H1 (cell line): ENCODE measurements at regions of chr10 and their contacts with region 1.

Region 1: DNA sequence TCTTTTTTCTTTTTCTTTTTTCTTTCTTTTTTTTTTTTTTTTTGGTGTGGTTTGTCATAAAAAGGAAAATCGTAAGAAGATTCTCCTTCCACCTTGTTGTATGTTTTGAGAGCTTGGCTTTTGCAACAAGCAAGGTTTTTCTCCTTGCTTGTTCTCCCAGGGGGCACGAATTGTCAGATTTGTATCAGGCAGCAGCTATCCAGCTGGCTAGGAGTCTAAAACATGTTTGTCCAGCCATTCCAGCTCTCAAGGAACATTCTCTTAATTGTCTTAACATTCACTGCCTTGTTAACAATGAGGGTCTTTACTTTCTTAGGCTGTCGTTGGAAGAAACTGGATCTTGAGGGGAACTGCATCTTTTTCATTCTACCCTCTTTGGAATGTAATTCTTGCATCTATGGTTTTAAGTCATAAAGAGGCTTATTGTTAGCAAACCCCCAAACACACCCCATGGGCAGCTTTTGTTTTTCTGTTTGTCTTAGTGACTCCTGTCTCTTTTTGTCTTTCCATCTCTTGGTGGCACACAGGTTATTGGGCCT is 14.7 kb downstream of the SHTN1 start:
- DNase-seq: no peak
- H3K4me3 ChIP-seq: no peak overlapping the region
- H3K27ac ChIP-seq: no peak overlapping the region
- H3K4me1 ChIP-seq: peaks cover 4 to 10% (median 5%) of the 10 kb centered on the region in 4 experiments; a peak in 4 of 7 replicates
- H3K27me3 ChIP-seq: peaks cover 0 to 3% (median 0%) of the 10 kb centered on the region in 4 experiments; a peak in 1 of 7 replicates
- CTCF ChIP-seq: no peak
- EP300 ChIP-seq: no peak
- POLR2A ChIP-seq: no peak
- RAD21 ChIP-seq: no peak

Region 2: GRCh38 chr10:116836902-116837523 is 153.3 kb before region 1 on chr10:
- CTCF ChIA-PET with region 1: no interaction called
- POLR2A ChIA-PET with region 1: no interaction called
- DNase-seq: no peak
- H3K4me3 ChIP-seq: no peak overlapping the region
- H3K27ac ChIP-seq: no peak overlapping the region
- H3K4me1 ChIP-seq: peaks cover 29 to 50% (median 41%) of the 10 kb centered on the region in 4 experiments
- H3K27me3 ChIP-seq: no peaks in the 10 kb centered on the region
- CTCF ChIP-seq: peak in 2 of 3 experiments; percentile 12 to 22; a peak in 2 of 4 replicates
- EP300 ChIP-seq: no peak
- POLR2A ChIP-seq: no peak
- RAD21 ChIP-seq: peak; percentile 54 to 61

Region 3: DNA sequence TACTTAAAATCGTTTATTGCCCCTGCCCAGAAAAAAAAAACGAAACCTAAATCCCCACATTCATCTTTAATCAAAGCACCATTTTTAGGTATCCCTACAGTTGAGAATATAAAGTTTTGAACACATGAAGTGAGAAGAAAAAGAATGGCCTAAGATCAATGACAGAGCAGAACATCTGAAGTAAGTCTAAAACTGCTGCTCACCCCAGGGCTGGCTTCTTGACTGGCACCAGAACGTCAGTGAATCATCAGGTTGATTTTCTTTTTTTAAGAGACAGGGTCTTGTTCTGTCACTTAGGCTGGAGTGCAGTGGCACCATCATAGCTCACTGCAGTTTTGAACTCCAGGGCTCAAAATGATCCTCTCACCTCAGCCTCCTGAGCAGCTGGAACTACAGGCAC is 10.3 kb before region 1 on chr10:
- CTCF ChIA-PET with region 1: interaction called, 10 read pairs
- POLR2A ChIA-PET with region 1: no interaction called
- DNase-seq: no peak
- H3K4me3 ChIP-seq: no peak overlapping the region
- H3K27ac ChIP-seq: no peak overlapping the region
- H3K4me1 ChIP-seq: peaks cover 0 to 5% (median 0%) of the 10 kb centered on the region in 4 experiments; a peak in 3 of 7 replicates
- H3K27me3 ChIP-seq: no peaks in the 10 kb centered on the region
- CTCF ChIP-seq: no peak
- EP300 ChIP-seq: no peak
- POLR2A ChIP-seq: no peak
- RAD21 ChIP-seq: no peak

Region 4: DNA sequence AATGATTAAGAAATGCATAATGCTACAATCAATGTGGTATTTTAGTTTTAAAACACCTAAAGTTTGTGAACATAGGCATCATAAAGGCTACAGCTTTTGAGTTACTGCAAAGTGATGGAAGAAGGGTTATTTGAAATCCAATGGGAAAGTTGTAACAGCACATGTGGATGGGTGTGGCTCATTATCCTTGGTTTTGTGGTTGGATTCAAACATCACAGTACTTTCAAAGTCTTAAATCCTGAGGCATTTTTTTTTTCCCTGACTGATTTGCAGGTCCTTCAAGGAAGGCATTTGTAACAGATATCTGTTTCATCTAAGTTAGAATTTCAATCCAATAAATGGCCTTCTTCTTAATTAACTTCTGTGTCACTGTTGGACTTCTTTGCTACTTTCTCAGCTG is 24.5 kb after region 1 on chr10:
- CTCF ChIA-PET with region 1: no interaction called
- POLR2A ChIA-PET with region 1: no interaction called
- DNase-seq: no peak
- H3K4me3 ChIP-seq: no peak overlapping the region
- H3K27ac ChIP-seq: no peak overlapping the region
- H3K4me1 ChIP-seq: no peaks in the 10 kb centered on the region
- H3K27me3 ChIP-seq: no peaks in the 10 kb centered on the region
- CTCF ChIP-seq: no peak
- EP300 ChIP-seq: no peak
- POLR2A ChIP-seq: no peak
- RAD21 ChIP-seq: no peak